Calu3 (cell line): ENCODE measurements at regions of chr2 and their contacts with region 1.

Region 1: GRCh38 chr2:54106631-54107454 is 8.6 kb upstream of the ACYP2 start:
- DNase-seq: peak; percentile 62
- H3K4me3 Mint-ChIP-seq: no peak overlapping the region
- H3K27ac Mint-ChIP-seq: no peak overlapping the region
- H3K4me1 Mint-ChIP-seq: peaks cover 10% of the 10 kb centered on the region
- H3K27me3 Mint-ChIP-seq: no peaks in the 10 kb centered on the region
- CTCF ChIP-seq: peak; percentile 38

Region 2: DNA sequence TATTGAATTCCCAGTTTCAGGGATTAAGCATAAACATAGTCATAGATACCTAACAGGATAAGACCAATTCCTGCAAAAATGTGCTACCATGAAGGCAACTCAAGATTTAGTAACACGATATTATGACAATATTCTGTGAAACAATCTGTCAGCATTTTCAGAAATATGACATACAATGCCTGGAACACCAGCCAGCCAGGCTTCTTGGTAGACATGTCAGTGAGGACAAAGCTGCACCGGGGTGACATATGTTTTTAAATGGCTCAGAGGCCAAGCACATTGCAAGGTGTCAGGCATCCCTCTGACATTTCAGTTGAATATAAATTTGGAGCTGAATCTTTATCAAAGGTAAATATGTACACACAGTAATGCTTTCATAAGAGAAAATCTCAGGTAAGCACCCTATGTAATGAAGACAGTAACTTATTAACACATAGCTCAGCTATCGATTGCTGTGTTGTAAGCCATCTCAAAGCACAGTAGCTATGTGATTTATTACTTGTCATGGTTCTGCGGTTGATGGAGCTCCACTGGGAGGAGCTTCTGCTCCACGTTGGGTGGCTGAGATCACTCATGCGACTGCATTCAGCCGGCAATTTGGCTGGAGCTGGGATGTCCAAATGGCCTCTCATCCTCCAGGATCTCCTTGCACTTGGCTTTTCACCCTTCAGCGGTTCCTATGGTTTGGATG is 584.7 kb after region 1 on chr2:
- CTCF ChIA-PET with region 1: interaction called, 10 read pairs
- intact Hi-C with region 1: no loop called
- DNase-seq: peak; percentile 69
- H3K4me3 Mint-ChIP-seq: no peak overlapping the region
- H3K27ac Mint-ChIP-seq: no peak overlapping the region
- H3K4me1 Mint-ChIP-seq: peaks cover 11% of the 10 kb centered on the region
- H3K27me3 Mint-ChIP-seq: no peaks in the 10 kb centered on the region
- CTCF ChIP-seq: no peak

Region 3: DNA sequence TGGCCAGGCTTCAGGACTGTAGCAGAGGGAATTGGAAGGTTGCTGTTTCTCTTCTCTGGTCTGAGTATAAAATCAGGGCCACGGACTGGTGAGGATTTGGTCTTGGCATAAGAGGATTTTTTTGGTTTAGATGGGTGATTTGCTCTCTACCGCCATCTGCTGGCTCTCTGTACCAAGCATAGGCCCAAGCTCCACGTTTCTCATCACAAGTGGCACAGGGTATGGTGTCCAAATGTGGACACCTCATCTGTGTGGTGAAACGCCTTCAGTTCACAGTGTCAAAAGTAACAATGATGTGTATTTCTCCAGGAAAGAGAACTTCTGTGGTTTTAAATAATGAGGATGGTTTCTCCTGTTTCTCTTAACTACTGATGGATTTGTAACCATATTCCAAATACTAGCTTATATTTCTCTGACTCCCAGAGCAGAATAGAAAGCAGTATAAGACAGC is 731.8 kb after region 1 on chr2:
- CTCF ChIA-PET with region 1: interaction called, 14 read pairs
- intact Hi-C with region 1: loop called (anchors 1 kb)
- DNase-seq: peak; percentile 63
- H3K4me3 Mint-ChIP-seq: no peak overlapping the region
- H3K27ac Mint-ChIP-seq: no peak overlapping the region
- H3K4me1 Mint-ChIP-seq: no peaks in the 10 kb centered on the region
- H3K27me3 Mint-ChIP-seq: peaks cover 15% of the 10 kb centered on the region
- CTCF ChIP-seq: peak; percentile 71

Region 4: GRCh38 chr2:55014962-55015939 is 908.4 kb after region 1 on chr2:
- CTCF ChIA-PET with region 1: no interaction called
- intact Hi-C with region 1: loop called (anchors 2 kb)
- DNase-seq: peak; percentile 62
- H3K4me3 Mint-ChIP-seq: peak overlapping the region; percentile 45
- H3K27ac Mint-ChIP-seq: peak overlapping the region; percentile 37
- H3K4me1 Mint-ChIP-seq: peaks cover 59% of the 10 kb centered on the region
- H3K27me3 Mint-ChIP-seq: no peaks in the 10 kb centered on the region
- CTCF ChIP-seq: peak; percentile 56

Region 5: GRCh38 chr2:55175254-55176025 is 1068.6 kb after region 1 on chr2:
- CTCF ChIA-PET with region 1: no interaction called
- intact Hi-C with region 1: loop called (anchors 10 kb)
- DNase-seq: peak; percentile 10
- H3K4me3 Mint-ChIP-seq: no peak overlapping the region
- H3K27ac Mint-ChIP-seq: no peak overlapping the region
- H3K4me1 Mint-ChIP-seq: peaks cover 9% of the 10 kb centered on the region
- H3K27me3 Mint-ChIP-seq: no peaks in the 10 kb centered on the region
- CTCF ChIP-seq: peak; percentile 26